ENCODE measurements at regions of chr3 and their contacts with region 1.

Region 1: GRCh38 chr3:64355401-64355807 is 130.1 kb upstream of the PRICKLE2 start:
- DNase-seq: no peak
- ATAC-seq: peak; percentile 48
- H3K4me3 ChIP-seq: no peak overlapping the region
- H3K27ac ChIP-seq: no peak overlapping the region
- H3K4me1 ChIP-seq: no peaks in the 10 kb centered on the region
- H3K27me3 ChIP-seq: no peaks in the 10 kb centered on the region; a peak in 1 of 4 replicates
- CTCF ChIP-seq: no peak
- EP300 ChIP-seq: no peak
- POLR2A ChIP-seq: no peak
- RAD21 ChIP-seq: no peak

Region 2: GRCh38 chr3:64368257-64369020 is 13.0 kb after region 1 on chr3:
- CTCF ChIA-PET with region 1: interaction called, 6 read pairs
- POLR2A ChIA-PET with region 1: no interaction called
- RAD21 ChIA-PET with region 1: interaction called, 6 read pairs
- SMC1A ChIA-PET with region 1: interaction called, 43 read pairs
- in situ Hi-C with region 1: no loop called
- intact Hi-C with region 1: no loop called
- DNase-seq: no peak
- ATAC-seq: no peak; the same call in 2 of the 3 replicates
- H3K4me3 ChIP-seq: no peak overlapping the region
- H3K27ac ChIP-seq: no peak overlapping the region
- H3K4me1 ChIP-seq: no peaks in the 10 kb centered on the region
- H3K27me3 ChIP-seq: no peaks in the 10 kb centered on the region
- CTCF ChIP-seq: no peak
- EP300 ChIP-seq: no peak
- POLR2A ChIP-seq: no peak
- RAD21 ChIP-seq: no peak

Region 3: DNA sequence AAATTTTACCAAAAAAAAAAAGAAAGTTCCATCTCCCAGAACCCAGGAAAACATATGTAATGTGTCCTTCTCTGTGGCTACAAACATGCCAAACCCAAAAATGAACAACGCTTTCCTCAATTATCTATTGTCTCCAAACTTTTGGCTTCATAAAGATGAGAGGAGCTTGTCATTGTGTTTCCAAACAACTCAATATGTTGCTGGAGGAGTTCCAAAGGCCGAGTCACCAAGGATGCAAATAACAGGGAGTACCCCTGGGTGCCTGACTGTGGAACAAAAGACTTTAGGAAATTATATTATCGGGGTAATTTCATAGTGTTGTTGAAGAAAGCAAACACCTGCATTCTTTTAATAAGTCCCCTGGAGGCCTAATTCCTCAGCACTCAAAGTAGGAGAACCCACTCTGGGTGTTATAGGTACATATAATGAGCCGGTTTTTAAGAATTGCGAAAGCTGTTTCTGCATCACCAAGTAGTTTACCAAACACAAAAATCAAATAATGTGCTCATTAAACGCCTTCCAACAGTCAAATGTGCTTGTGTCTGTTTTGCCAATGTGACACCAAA is 76.2 kb after region 1 on chr3:
- CTCF ChIA-PET with region 1: no interaction called
- POLR2A ChIA-PET with region 1: no interaction called
- RAD21 ChIA-PET with region 1: no interaction called
- SMC1A ChIA-PET with region 1: no interaction called
- in situ Hi-C with region 1: no loop called
- intact Hi-C with region 1: no loop called
- DNase-seq: no peak
- ATAC-seq: no peak
- H3K4me3 ChIP-seq: no peak overlapping the region
- H3K27ac ChIP-seq: no peak overlapping the region
- H3K4me1 ChIP-seq: no peaks in the 10 kb centered on the region
- H3K27me3 ChIP-seq: no peaks in the 10 kb centered on the region
- CTCF ChIP-seq: no peak
- EP300 ChIP-seq: no peak
- POLR2A ChIP-seq: no peak
- RAD21 ChIP-seq: no peak

Region 4: GRCh38 chr3:64501298-64501906 is 146.0 kb after region 1 on chr3:
- CTCF ChIA-PET with region 1: no interaction called
- POLR2A ChIA-PET with region 1: no interaction called
- RAD21 ChIA-PET with region 1: no interaction called
- SMC1A ChIA-PET with region 1: no interaction called
- in situ Hi-C with region 1: no loop called
- intact Hi-C with region 1: no loop called
- DNase-seq: no peak
- ATAC-seq: no peak
- H3K4me3 ChIP-seq: no peak overlapping the region
- H3K27ac ChIP-seq: no peak overlapping the region
- H3K4me1 ChIP-seq: no peaks in the 10 kb centered on the region
- H3K27me3 ChIP-seq: no peaks in the 10 kb centered on the region
- CTCF ChIP-seq: no peak
- EP300 ChIP-seq: no peak
- POLR2A ChIP-seq: no peak
- RAD21 ChIP-seq: no peak

Region 5: DNA sequence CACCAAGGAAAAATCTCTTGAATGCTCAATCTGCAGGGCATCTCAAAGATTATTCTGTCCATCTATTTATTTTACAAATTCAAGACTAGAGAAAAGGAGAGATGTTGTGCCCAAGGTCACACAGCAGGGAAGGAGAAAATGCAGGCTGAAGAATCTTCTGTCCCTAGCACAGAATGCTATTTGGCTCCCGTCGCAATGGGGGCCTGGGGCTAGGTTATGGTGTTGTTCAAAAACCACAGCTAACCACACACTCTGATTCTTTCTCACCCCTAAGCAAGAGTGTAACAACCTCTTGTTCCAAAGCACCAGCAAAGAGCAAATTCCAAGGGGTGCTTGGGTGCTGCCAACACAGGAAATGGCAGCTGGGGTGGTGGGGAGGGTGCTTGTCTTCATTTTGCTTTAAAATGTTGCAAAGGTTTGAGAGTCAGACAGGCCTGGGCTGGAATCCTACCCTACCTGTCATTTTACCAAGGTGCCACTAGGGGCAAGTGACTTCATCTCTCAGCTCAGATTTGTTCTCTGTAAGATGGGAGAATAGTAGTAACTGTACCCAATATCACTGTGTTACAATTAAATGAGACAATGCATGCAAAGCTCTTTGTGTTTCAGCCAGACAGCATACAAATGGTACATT is 219.9 kb after region 1 on chr3:
- CTCF ChIA-PET with region 1: no interaction called
- POLR2A ChIA-PET with region 1: no interaction called
- RAD21 ChIA-PET with region 1: no interaction called
- SMC1A ChIA-PET with region 1: no interaction called
- in situ Hi-C with region 1: no loop called
- intact Hi-C with region 1: no loop called
- DNase-seq: no peak
- ATAC-seq: peak; percentile 86
- H3K4me3 ChIP-seq: no peak overlapping the region
- H3K27ac ChIP-seq: no peak overlapping the region
- H3K4me1 ChIP-seq: no peaks in the 10 kb centered on the region
- H3K27me3 ChIP-seq: no peaks in the 10 kb centered on the region
- CTCF ChIP-seq: peak; percentile 50 to 56 (median 52)
- EP300 ChIP-seq: no peak
- POLR2A ChIP-seq: no peak
- RAD21 ChIP-seq: 0 out of 2 replicates have a peak, but pooled peaks have one; percentile 11

Region 6: GRCh38 chr3:65026151-65026550 is 670.7 kb after region 1 on chr3:
- CTCF ChIA-PET with region 1: no interaction called
- POLR2A ChIA-PET with region 1: interaction called, 11 read pairs
- RAD21 ChIA-PET with region 1: no interaction called
- SMC1A ChIA-PET with region 1: no interaction called
- in situ Hi-C with region 1: no loop called
- intact Hi-C with region 1: no loop called
- DNase-seq: no peak
- ATAC-seq: no peak
- H3K4me3 ChIP-seq: no peak overlapping the region
- H3K27ac ChIP-seq: no peak overlapping the region
- H3K4me1 ChIP-seq: no peaks in the 10 kb centered on the region
- H3K27me3 ChIP-seq: no peaks in the 10 kb centered on the region
- CTCF ChIP-seq: no peak
- EP300 ChIP-seq: no peak
- POLR2A ChIP-seq: no peak
- RAD21 ChIP-seq: no peak

Measured in GM12878 (cell line).